Activated naive CD4-positive, alpha-beta T cell treated with anti-CD3 and anti-CD28 coated beads, Interleukin-2, amount 10 ng/mL, durations not matched to agents 7 days and 5 days (primary cell): ENCODE measurements at regions of chr20 and their contacts with region 1.

Region 1: DNA sequence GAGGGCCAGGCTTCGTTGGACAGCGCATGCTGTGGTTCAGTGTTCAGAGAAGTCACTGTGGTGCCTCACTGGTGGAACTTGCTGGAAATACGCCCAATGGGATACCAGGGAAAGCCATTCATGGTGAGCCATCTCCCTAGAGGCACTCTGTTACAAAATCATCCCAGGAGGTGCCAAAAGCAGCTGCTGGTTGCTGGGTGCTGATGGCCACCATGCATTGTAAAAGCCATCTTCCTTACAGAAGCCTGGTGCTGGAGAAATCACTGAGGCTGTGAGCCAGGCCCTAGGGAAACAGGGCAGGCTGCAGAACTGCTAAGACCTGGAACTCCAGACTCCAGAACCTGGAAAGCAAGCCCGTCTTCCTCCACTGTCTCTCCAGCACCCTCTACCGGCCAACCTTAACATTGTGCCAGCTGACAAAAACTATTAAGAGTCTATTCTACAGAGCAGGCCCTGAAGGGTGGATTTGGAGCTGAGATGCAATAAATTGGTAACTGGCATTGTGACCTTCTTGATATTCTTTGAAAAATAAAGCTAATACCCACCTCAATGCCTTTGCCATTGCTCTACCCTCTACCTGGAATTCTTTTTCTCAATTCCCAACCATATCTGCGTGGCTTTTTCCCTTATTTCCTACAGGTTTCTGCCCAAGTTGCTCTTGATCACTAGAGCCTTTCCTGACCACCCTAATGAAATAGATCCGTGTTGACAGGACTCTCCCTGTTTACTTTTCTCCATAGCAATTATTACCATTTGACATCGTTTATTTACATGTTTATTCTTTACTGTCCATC is 18.5 kb downstream of the SNRPB start:
- DNase-seq: peak; percentile 80
- H3K4me3 Mint-ChIP-seq: no peak overlapping the region
- H3K27ac Mint-ChIP-seq: no peak overlapping the region
- H3K4me1 Mint-ChIP-seq: peaks cover 4% of the 10 kb centered on the region
- H3K27me3 Mint-ChIP-seq: peaks cover 7% of the 10 kb centered on the region

Region 2: GRCh38 chr20:2164966-2165365 is 287.2 kb before region 1 on chr20:
- CTCF ChIA-PET with region 1: no interaction called
- DNase-seq: no peak
- H3K4me3 Mint-ChIP-seq: no peak overlapping the region
- H3K27ac Mint-ChIP-seq: no peak overlapping the region
- H3K4me1 Mint-ChIP-seq: no peaks in the 10 kb centered on the region
- H3K27me3 Mint-ChIP-seq: no peaks in the 10 kb centered on the region

Region 3: DNA sequence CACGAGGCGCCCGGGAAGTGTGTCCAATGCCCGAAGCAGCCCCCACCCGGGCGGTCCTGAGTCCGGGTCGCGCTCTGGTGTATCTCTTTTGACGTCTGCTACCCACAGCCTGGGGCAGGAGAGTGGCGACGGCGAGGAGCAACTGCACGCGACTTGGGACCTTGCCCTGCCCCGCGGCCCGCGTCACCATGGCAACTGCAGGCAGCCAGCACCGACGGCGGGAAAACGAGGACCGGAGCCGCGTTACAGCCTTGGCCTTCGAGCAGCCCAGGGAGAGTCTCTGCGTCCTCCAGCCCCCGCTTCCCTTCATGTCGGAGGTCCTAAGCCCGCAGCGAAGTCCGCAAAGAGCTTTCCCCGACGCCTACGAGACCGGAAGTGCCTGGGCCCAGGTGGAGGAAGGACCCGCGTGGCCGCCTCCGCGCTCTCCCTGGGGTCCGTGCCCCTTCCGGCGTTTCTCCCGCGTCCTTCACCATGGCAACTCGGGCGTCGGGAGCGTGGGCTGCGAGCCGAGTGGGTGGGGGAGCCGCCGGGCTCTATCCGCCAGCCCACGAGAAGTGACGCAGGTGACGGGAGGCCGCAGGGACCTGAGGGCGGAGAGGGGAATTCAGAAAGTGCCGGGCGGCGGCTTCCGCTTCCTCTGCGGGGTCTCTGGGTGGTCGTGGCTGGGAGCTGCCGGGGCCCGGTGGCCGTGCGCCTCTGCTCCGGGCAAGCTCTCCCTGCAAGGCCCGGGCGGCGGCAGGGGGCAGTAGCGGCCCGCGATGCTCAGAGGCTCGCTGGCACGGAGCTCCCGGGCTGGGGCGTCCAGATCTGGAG is 245.0 kb before region 1 on chr20:
- CTCF ChIA-PET with region 1: interaction called, 33 read pairs
- DNase-seq: peak; percentile 68
- H3K4me3 Mint-ChIP-seq: peak overlapping the region; percentile 67
- H3K27ac Mint-ChIP-seq: no peak overlapping the region
- H3K4me1 Mint-ChIP-seq: peaks cover 13% of the 10 kb centered on the region
- H3K27me3 Mint-ChIP-seq: peaks cover 63% of the 10 kb centered on the region

Region 4: GRCh38 chr20:2368621-2369020 is 83.5 kb before region 1 on chr20:
- CTCF ChIA-PET with region 1: interaction called, 11 read pairs
- DNase-seq: no peak
- H3K4me3 Mint-ChIP-seq: no peak overlapping the region
- H3K27ac Mint-ChIP-seq: no peak overlapping the region
- H3K4me1 Mint-ChIP-seq: no peaks in the 10 kb centered on the region
- H3K27me3 Mint-ChIP-seq: peaks cover 63% of the 10 kb centered on the region

Region 5: GRCh38 chr20:2387180-2387577 is 65.0 kb before region 1 on chr20:
- CTCF ChIA-PET with region 1: interaction called, 26 read pairs
- DNase-seq: peak; percentile 81
- H3K4me3 Mint-ChIP-seq: no peak overlapping the region
- H3K27ac Mint-ChIP-seq: no peak overlapping the region
- H3K4me1 Mint-ChIP-seq: peaks cover 5% of the 10 kb centered on the region
- H3K27me3 Mint-ChIP-seq: peaks cover 63% of the 10 kb centered on the region